ENCODE measurements at regions of chr16 and their contacts with region 1.

Region 1: DNA sequence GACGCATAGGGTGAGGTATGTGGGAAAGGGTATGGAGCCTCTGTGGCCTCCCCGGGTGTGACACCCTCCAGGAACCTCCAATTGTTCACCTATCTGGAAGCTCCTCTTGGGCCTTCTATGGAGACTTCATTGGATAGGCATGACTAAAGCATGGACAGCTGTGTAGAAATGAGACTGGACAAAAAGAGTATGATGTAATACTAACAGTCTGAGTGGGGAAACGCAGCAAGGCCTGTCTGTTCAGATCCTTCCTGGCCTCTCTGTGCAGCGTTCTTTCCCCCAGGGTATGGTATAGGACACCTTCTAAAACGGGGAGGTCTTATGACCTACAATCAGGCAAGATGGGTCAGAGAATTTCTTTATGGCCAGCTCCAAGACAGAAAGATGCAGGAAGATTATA is 30.7 kb upstream of the CCNF start:
- DNase-seq: no peak
- ATAC-seq: no peak
- H3K4me3 Mint-ChIP-seq: no peak overlapping the region
- H3K27ac Mint-ChIP-seq: no peak overlapping the region
- H3K4me1 Mint-ChIP-seq: no peaks in the 10 kb centered on the region
- H3K27me3 Mint-ChIP-seq: no peaks in the 10 kb centered on the region; the same call in 1 of the 2 replicates
- CTCF ChIP-seq: no peak

Region 2: GRCh38 chr16:2415085-2415484 is 16.6 kb after region 1 on chr16:
- CTCF ChIA-PET with region 1: no interaction called
- POLR2A ChIA-PET with region 1: interaction called, 15 read pairs
- DNase-seq: no peak
- ATAC-seq: no peak
- H3K4me3 Mint-ChIP-seq: no peak overlapping the region
- H3K27ac Mint-ChIP-seq: no peak overlapping the region
- H3K4me1 Mint-ChIP-seq: no peaks in the 10 kb centered on the region
- H3K27me3 Mint-ChIP-seq: peaks cover 6% of the 10 kb centered on the region; the same call in 1 of the 2 replicates
- CTCF ChIP-seq: no peak